Esophagus squamous epithelium (tissue), 5 donors: ENCODE measurements at regions of chr19 and their contacts with region 1.

Region 1: GRCh38 chr19:51016798-51017683 is 2.5 kb downstream of the KLK10 start:
- DNase-seq: no peak
- H3K4me3 ChIP-seq: peak overlapping the region; percentile 49 to 66 (median 60)
- H3K27ac ChIP-seq: peak overlapping the region; percentile 85 to 94 (median 88)
- H3K4me1 ChIP-seq: peaks cover 14 to 56% (median 16%) of the 10 kb centered on the region in 3 donors
- H3K27me3 ChIP-seq: peaks cover 0 to 85% (median 2%) of the 10 kb centered on the region in 4 donors
- CTCF ChIP-seq: peak; percentile 36 to 96 (median 89)
- POLR2A ChIP-seq: peak in 1 of 4 donors; percentile 8

Region 2: DNA sequence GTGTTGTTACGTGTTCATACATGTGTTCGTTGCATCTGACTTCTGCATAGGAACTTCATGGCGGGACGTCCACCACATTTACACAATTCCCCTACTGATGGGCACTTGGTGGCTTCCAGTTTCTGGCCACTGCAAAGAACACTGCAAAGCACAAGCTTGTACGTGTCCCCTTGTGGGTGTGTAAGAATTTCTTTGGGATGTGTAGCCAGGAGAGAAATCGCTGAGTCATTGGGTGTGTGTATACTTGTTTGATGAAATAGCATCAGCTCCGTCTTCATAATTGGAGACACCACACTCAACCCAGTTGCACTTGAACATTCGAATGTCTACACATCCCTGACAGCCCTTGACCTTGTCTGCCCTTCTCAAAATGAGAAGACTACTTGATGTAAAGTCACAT is 83.4 kb before region 1 on chr19:
- intact Hi-C with region 1: loop called (anchors 5 kb)
- DNase-seq: no peak
- H3K4me3 ChIP-seq: no peak overlapping the region
- H3K27ac ChIP-seq: peak overlapping the region; percentile 64 to 89 (median 83)
- H3K4me1 ChIP-seq: peaks cover 0 to 65% (median 3%) of the 10 kb centered on the region in 3 donors
- H3K27me3 ChIP-seq: peaks cover 0 to 35% (median 0%) of the 10 kb centered on the region in 4 donors
- CTCF ChIP-seq: no peak
- POLR2A ChIP-seq: no peak

Region 3: DNA sequence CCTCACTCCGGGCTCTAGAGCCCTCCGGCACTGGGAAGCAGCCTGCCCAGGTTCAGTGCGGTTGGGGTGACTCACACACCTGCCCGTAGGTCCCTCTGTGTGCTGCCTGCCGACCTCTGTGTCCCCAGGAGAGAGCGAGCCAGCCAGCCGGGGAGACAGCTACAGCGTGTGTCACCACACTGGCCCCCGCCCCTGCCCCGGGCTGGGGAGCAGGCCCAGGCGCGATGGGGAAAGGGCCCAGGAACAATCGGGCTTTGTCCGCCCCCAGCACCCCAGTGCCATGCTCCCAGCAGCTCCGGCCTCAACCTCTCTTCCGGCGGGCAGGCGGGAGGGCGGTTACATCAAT is 47.7 kb before region 1 on chr19 and contains the start of gene KLK6:
- intact Hi-C with region 1: no loop called
- DNase-seq: no peak
- H3K4me3 ChIP-seq: peak within 1 kb of the TSS in 1 of 4 donors; percentile 24
- H3K27ac ChIP-seq: peak within 1 kb of the TSS; percentile 31 to 57 (median 55)
- H3K4me1 ChIP-seq: peaks cover 10 to 50% (median 13%) of the 10 kb centered on the region in 3 donors
- H3K27me3 ChIP-seq: peaks cover 0 to 75% (median 0%) of the 10 kb centered on the region in 4 donors
- CTCF ChIP-seq: no peak
- POLR2A ChIP-seq: no peak
- total RNA-seq, gene KLK6: 6.1 to 160 (median 102) TPM

Region 4: DNA sequence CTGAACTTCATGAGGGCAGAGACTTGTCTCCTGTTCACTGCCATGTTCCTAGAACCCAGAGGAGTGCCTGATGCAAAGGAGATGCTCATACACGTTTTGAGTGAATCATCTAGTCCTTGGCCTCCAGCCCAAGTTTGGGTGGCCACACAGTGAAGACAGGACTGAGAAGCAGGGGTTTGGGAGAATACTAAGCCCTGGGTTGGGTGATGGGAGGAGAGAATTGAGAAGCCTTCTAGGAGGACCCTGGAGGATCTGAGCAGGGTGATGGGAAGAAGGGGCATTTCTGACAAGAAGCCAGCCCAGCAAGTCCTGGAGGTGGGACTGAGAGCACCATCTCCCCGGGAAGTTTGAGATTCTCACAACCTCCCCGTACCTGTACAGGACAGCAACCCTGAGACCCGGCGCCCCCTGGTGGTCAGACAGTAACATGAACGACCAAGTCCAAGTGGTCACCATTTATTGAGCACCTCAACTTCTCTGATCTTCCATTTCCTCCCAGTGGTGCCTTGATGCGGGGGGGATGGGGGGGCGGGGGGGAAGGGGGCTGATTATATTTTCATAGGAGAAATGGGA is 80.2 kb after region 1 on chr19:
- intact Hi-C with region 1: loop called (anchors 5 kb)
- DNase-seq: no peak
- H3K4me3 ChIP-seq: no peak overlapping the region
- H3K27ac ChIP-seq: peak overlapping the region; percentile 49 to 66 (median 56)
- H3K4me1 ChIP-seq: peaks cover 7 to 45% (median 9%) of the 10 kb centered on the region in 3 donors
- H3K27me3 ChIP-seq: no peaks in the 10 kb centered on the region
- CTCF ChIP-seq: peak; percentile 27 to 74 (median 65)
- POLR2A ChIP-seq: no peak